ENCODE measurements at regions of chr4 and their contacts with region 1.

Region 1: GRCh38 chr4:168585168-168586091 is 88.6 kb downstream of the PALLD start:
- DNase-seq: peak in 1 of 2 experiments; percentile 60
- H3K4me3 ChIP-seq: no peak overlapping the region
- H3K27ac ChIP-seq: peak overlapping the region; percentile 98
- H3K4me1 ChIP-seq: peaks cover 54% of the 10 kb centered on the region
- H3K27me3 ChIP-seq: no peaks in the 10 kb centered on the region
- CTCF ChIP-seq: peak; percentile 37; the same call in 1 of the 2 replicates

Region 2: DNA sequence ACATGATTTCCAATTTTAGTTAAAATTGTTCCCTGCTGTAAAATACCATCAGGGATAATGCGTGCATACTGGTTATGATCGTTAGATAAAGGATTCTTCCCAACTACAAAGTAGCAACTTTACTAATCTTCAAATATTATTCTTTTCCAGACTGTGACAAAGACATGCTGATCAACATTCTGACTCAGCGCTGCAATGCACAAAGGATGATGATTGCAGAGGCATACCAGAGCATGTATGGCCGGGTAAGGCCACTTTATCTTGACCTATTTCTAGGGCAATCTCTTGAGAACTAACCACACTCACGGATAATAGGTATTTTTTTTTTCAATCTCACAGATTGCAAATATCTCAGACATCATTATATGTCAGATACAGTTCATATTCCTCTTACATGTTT is 446.1 kb before region 1 on chr4:
- CTCF ChIA-PET with region 1: no interaction called
- POLR2A ChIA-PET with region 1: no interaction called
- intact Hi-C with region 1: no loop called
- DNase-seq: peak in 1 of 2 experiments; percentile 16
- H3K4me3 ChIP-seq: no peak overlapping the region
- H3K27ac ChIP-seq: no peak overlapping the region
- H3K4me1 ChIP-seq: 0 out of 2 replicates have a peak, but pooled peaks cover 6% of the 10 kb centered on the region
- H3K27me3 ChIP-seq: no peaks in the 10 kb centered on the region
- CTCF ChIP-seq: no peak

Region 3: DNA sequence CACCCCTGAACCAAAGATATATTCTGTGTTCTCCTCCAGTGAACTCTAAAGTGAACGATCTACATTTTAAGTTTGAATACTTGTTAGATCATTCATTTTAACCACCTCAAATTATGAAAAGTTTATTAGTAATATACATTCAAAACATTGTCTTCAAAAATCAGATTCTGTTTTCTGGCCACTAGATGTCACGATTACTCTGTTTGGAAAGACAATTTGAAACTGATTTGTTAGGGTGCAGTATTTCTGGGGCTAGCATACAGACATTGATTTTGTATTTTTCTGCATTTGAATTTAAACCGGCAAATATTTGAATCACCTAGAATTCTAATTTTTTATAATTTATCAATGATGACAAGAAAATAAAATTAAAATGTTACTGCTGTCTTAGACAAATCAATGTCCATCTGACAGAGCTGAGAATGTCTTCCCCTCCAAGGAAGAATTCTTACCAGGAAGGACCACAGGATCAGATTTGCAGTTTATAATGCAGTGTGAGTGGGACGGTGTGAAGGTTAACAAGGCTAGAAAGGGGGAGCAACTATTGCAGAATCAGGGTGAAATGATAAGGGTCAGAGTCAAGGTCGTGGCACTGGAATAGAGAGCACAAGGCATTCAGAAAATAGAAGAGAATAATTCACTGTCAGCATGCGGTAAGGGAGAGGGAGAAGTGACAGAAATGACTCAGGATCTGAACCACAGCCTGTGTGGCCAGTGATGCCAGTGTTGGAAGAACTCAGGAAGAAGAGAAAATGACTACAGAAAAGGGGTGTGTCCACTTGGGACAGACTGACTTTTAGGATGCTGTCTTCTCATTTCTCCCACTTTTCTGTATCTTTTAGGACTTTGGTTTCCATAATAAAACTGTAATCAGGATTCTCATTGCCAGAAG is 401.5 kb before region 1 on chr4:
- CTCF ChIA-PET with region 1: no interaction called
- POLR2A ChIA-PET with region 1: no interaction called
- intact Hi-C with region 1: loop called (anchors 10 kb)
- DNase-seq: no peak
- H3K4me3 ChIP-seq: no peak overlapping the region
- H3K27ac ChIP-seq: no peak overlapping the region
- H3K4me1 ChIP-seq: no peaks in the 10 kb centered on the region
- H3K27me3 ChIP-seq: no peaks in the 10 kb centered on the region
- CTCF ChIP-seq: peak; percentile 78

Region 4: DNA sequence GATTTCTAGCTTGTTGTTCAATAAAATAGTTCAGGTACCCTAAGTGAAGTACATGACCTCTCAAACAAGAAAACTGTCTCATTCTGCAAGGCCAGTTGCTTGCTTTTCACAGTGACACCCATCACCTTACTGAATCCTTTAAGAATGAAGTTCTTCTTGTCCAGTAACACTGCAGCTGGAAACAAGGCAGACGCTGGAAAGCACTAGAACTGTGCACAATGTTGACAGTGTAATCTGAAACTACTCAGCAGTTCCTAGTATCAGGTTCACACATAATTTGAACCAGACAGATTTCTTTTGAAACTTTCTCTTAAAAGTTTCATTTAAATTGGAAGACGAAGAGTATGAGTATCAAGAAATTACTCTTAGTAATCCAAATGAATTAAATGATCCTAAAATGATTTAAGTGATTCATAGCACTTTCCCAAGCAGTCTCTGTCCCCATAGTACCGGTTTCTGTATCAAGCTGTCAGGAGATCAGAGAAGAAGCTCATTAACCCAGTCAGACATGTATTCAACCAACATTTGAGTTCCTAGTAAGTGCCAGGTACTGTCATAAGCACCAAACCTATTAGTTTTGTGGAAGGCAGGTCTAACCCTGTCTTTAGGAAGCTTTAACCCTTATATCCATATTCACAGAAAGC is 25.1 kb before region 1 on chr4:
- CTCF ChIA-PET with region 1: no interaction called
- POLR2A ChIA-PET with region 1: no interaction called
- intact Hi-C with region 1: loop called (anchors 2 kb)
- DNase-seq: peak; percentile 58 to 86
- H3K4me3 ChIP-seq: no peak overlapping the region
- H3K27ac ChIP-seq: peak overlapping the region; percentile 80
- H3K4me1 ChIP-seq: peaks cover 47% of the 10 kb centered on the region
- H3K27me3 ChIP-seq: no peaks in the 10 kb centered on the region
- CTCF ChIP-seq: no peak

Region 5: DNA sequence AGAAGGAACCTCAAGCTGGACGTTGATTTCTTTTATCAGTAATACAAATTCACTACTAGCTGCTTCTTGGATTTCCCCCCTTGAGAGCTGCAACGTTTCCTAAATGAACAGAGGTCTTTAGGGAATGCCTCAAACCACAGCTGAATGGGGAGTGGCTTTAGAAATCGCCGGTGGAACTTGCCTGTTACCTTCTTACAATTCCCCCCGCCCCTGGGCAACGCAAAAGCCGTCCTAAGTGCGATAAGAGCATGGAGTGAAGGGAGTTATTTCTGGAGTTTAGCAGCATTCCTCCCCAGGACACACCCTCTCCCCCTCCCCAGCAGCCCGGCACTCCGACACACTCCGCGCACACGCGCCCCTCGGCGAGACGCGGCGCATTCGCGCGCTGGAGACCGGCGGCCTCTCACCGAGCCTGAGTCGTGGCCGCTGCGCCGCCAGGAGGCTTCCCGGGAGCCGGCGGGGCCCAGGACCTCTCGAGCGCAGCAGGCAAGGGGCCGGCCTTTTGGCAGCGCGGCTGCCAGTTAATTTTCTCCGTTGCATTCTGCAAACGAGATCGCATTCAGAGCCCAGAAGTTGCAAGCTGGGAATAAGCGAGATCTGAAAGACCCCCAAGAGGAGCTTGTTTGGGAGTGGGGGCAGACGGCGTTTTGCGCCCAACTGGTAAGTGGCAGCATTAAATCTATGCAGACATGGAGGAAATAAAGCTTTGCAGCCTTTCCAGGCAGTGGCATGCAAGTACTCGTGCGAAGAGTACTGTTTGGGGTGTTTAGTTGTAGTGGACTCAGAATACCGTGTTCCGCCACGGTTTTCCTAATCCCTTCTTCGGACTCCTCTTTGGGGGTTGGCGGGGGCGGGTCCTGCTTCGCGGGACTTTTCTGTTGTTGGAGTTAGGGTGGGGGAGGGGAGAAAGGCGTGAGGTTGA is 46.1 kb after region 1 on chr4:
- CTCF ChIA-PET with region 1: interaction called, 3 read pairs
- POLR2A ChIA-PET with region 1: interaction called, 4 read pairs
- intact Hi-C with region 1: loop called (anchors 1 kb)
- DNase-seq: peak; percentile 66 to 78
- H3K4me3 ChIP-seq: peak overlapping the region; percentile 92
- H3K27ac ChIP-seq: peak overlapping the region; percentile 75
- H3K4me1 ChIP-seq: peaks cover 57% of the 10 kb centered on the region
- H3K27me3 ChIP-seq: no peaks in the 10 kb centered on the region
- CTCF ChIP-seq: no peak; the same call in 1 of the 2 replicates

Region 6: GRCh38 chr4:168683595-168683994 is 98.2 kb after region 1 on chr4:
- CTCF ChIA-PET with region 1: no interaction called
- POLR2A ChIA-PET with region 1: no interaction called
- intact Hi-C with region 1: no loop called
- DNase-seq: no peak
- H3K4me3 ChIP-seq: no peak overlapping the region
- H3K27ac ChIP-seq: no peak overlapping the region
- H3K4me1 ChIP-seq: no peaks in the 10 kb centered on the region
- H3K27me3 ChIP-seq: no peaks in the 10 kb centered on the region
- CTCF ChIP-seq: no peak

Region 7: GRCh38 chr4:168765726-168766125 is 180.3 kb after region 1 on chr4:
- CTCF ChIA-PET with region 1: no interaction called
- POLR2A ChIA-PET with region 1: no interaction called
- intact Hi-C with region 1: loop called (anchors 5 kb)
- DNase-seq: peak in 1 of 2 experiments; percentile 73
- H3K4me3 ChIP-seq: no peak overlapping the region
- H3K27ac ChIP-seq: no peak overlapping the region
- H3K4me1 ChIP-seq: no peaks in the 10 kb centered on the region
- H3K27me3 ChIP-seq: no peaks in the 10 kb centered on the region
- CTCF ChIP-seq: no peak

Region 8: DNA sequence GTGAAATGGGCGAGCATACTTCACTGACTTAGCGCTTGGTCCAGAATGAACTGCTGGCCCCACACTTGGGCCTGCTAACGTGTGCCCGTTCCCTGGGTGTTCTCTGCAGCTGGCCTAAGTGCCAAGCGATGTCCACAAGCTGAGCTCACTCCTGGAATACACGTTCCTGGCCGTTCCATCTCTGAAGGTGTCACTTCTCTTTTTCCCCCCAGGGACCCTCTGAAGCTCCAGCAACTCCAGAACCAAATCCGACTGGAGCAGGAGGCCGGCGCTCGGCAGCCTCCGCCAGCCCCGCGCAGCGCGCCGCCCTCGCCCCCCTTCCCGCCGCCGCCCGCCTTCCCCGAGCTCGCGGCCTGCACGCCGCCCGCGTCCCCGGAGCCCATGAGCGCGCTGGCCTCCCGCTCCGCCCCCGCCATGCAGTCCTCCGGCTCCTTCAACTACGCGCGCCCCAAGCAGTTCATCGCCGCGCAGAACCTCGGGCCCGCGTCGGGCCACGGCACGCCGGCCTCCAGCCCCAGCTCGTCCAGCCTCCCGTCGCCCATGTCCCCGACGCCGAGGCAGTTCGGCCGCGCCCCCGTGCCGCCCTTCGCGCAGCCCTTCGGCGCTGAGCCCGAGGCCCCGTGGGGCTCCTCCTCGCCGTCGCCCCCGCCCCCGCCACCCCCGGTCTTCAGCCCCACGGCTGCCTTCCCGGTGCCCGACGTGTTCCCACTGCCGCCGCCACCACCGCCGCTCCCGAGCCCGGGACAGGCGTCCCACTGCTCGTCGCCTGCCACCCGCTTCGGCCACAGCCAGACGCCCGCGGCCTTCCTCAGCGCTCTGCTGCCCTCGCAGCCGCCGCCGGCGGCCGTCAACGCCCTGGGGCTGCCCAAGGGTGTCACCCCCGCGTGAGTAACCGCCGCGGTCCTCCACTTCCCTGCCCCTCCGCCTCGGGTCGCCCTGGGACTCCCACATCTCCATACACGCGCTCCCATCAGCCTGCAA is 292.4 kb after region 1 on chr4:
- CTCF ChIA-PET with region 1: no interaction called
- POLR2A ChIA-PET with region 1: no interaction called
- intact Hi-C with region 1: loop called (anchors 5 kb)
- DNase-seq: peak in 1 of 2 experiments; percentile 49
- H3K4me3 ChIP-seq: no peak overlapping the region
- H3K27ac ChIP-seq: no peak overlapping the region
- H3K4me1 ChIP-seq: no peaks in the 10 kb centered on the region
- H3K27me3 ChIP-seq: no peaks in the 10 kb centered on the region
- CTCF ChIP-seq: no peak